PC-3 (cell line): ENCODE measurements at regions of chr5 and their contacts with region 1.

Region 1: GRCh38 chr5:8848998-8849594 is 696.8 kb downstream of the SEMA5A start:
- DNase-seq: peak; percentile 95
- ATAC-seq: peak; percentile 79
- H3K4me3 ChIP-seq: no peak overlapping the region
- H3K27ac ChIP-seq: peak overlapping the region; percentile 46
- H3K4me1 ChIP-seq: peaks cover 33% of the 10 kb centered on the region
- H3K27me3 ChIP-seq: no peaks in the 10 kb centered on the region
- CTCF ChIP-seq: no peak

Region 2: DNA sequence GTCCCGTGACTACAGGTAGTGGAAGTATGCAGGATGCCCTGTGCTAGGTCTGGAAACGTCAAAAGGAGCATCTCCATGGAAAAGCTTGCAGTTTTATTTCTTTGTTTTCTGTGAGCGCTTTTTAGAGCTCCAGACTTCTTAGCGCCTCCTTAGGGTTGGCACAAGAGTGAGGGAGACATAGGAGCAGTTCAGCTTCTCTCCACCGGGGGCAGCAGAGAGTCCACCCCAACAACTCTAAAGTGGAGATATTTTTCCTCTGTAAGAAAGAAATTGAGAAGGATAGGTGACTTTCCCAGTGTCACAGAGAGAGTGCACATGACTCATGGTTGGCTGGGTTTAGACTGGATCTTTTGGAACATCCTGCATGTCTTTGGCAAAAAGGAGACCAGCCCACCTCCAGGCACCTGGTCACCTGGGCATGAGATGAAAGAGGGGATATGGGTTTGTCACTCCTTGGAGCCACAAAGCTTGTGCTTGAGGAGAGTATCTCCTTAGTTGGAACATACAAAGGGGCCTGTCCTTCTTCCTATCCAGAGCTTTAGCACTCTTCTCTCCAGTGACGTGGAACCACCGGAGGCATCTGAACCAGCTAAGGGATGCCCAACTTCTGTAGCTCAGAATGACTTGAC is 59.1 kb after region 1 on chr5:
- CTCF ChIA-PET with region 1: no interaction called
- POLR2A ChIA-PET with region 1: no interaction called
- intact Hi-C with region 1: loop called (anchors 1 kb)
- DNase-seq: peak; percentile 83
- ATAC-seq: no peak
- H3K4me3 ChIP-seq: peak overlapping the region; percentile 42; the same call in 1 of the 2 replicates
- H3K27ac ChIP-seq: peak overlapping the region; percentile 95
- H3K4me1 ChIP-seq: peaks cover 52% of the 10 kb centered on the region
- H3K27me3 ChIP-seq: no peaks in the 10 kb centered on the region
- CTCF ChIP-seq: peak; percentile 99; the same call in 1 of the 2 replicates

Region 3: DNA sequence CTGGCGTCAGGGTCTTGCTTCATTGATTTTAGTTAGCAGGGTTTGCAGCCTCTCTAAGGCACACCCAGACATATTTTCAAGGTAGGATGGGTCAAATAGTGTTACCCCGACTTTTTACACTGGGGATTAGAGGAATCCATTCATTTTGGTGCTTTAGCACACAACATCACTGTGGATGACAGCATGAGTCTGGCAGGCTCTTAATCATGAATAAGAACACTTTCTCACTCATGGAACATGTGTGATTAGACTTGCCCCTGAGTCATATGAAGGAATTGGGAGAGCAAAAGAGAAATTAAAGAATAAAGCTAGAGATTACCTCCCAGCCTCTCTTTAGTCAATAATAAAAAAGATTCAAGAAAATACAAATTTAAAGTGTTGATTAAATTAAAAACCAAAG is 521.2 kb after region 1 on chr5:
- CTCF ChIA-PET with region 1: no interaction called
- POLR2A ChIA-PET with region 1: no interaction called
- intact Hi-C with region 1: loop called (anchors 10 kb)
- DNase-seq: no peak
- ATAC-seq: no peak
- H3K4me3 ChIP-seq: no peak overlapping the region
- H3K27ac ChIP-seq: no peak overlapping the region
- H3K4me1 ChIP-seq: peaks cover 22% of the 10 kb centered on the region
- H3K27me3 ChIP-seq: no peaks in the 10 kb centered on the region
- CTCF ChIP-seq: no peak